ENCODE measurements at regions of chr2 and their contacts with region 1.

Region 1: DNA sequence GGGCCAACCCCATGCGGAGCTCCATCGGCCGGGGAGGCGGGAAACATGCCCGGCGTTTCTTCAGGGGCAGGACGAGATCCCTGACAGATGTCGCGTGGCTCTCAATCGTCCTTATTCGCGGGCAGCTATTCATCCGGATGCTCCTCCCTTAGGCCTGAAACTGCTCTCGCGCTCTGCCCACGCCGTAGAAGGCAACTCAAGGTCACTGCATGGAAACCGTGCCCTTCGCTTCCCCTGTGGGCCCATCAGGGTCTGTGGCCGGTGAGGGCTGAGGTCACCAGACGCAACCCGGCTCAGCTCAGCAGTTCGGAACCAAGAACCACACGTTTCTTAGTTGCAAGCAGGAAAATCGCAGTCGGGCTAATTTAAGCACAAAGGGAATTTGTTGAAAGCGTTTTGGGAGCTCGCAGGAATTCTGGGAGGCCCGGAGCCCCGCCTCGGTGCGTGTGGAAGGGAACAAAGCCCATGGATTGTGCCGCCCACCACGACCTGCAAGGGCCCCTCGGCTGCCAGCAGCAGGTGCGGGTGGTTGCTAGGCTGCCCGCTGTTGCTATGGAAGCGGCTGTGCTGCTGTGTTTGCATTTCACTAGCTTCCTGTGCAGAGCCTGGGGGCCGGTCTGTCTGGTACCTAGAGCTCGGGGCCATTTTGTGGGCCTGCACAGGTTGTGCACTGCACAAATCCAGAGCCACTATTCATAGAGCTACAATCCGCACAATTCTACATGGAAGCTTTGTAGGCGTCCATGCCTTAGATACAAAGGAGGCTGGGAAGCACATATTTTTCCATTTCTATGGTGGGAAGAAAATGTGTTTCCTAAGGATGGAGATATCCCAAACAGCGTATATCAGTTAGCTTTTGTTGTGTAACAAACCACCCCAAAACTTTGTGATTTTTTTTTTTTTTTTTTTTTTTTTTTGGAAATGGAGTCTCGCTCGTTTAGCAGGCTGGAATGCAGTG is 6.0 kb upstream of the ALLC start:
- DNase-seq: peak; percentile 86
- ATAC-seq: peak; percentile 81
- H3K4me3 Mint-ChIP-seq: peak overlapping the region; percentile 72
- H3K27ac Mint-ChIP-seq: peak overlapping the region; percentile 91
- H3K4me1 Mint-ChIP-seq: peaks cover 14% of the 10 kb centered on the region
- H3K27me3 Mint-ChIP-seq: no peaks in the 10 kb centered on the region

Region 2: DNA sequence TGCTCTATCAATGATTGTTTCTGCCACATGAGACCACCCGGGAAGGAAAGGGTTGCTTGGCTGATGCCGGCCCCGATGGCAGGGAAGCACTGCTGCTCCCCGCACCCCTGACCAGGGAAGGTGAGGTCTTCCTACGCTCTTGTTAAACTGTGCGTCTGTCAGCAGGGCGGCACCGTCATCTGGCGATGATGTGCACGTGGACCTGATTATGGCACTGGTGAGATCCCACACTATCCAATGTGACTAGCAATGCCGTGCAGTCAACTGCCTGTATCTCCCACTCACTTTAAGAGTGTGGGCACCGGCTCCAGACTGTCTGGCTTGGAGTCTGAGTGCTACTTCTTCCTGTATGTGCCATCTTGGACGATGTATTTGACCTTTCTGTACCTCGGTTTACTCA is 1530.1 kb before region 1 on chr2:
- CTCF ChIA-PET with region 1: interaction called, 3 read pairs
- POLR2A ChIA-PET with region 1: no interaction called
- intact Hi-C with region 1: loop called in 1 of 2 experiments (anchors 2 kb)
- DNase-seq: no peak
- ATAC-seq: no peak
- H3K4me3 Mint-ChIP-seq: no peak overlapping the region
- H3K27ac Mint-ChIP-seq: no peak overlapping the region
- H3K4me1 Mint-ChIP-seq: peaks cover 2% of the 10 kb centered on the region
- H3K27me3 Mint-ChIP-seq: no peaks in the 10 kb centered on the region

Region 3: GRCh38 chr2:3214827-3215404 is 437.1 kb before region 1 on chr2:
- CTCF ChIA-PET with region 1: no interaction called
- POLR2A ChIA-PET with region 1: no interaction called
- intact Hi-C with region 1: no loop called
- DNase-seq: no peak
- ATAC-seq: peak; percentile 62
- H3K4me3 Mint-ChIP-seq: no peak overlapping the region
- H3K27ac Mint-ChIP-seq: peak overlapping the region; percentile 63
- H3K4me1 Mint-ChIP-seq: peaks cover 33% of the 10 kb centered on the region
- H3K27me3 Mint-ChIP-seq: no peaks in the 10 kb centered on the region

Region 4: DNA sequence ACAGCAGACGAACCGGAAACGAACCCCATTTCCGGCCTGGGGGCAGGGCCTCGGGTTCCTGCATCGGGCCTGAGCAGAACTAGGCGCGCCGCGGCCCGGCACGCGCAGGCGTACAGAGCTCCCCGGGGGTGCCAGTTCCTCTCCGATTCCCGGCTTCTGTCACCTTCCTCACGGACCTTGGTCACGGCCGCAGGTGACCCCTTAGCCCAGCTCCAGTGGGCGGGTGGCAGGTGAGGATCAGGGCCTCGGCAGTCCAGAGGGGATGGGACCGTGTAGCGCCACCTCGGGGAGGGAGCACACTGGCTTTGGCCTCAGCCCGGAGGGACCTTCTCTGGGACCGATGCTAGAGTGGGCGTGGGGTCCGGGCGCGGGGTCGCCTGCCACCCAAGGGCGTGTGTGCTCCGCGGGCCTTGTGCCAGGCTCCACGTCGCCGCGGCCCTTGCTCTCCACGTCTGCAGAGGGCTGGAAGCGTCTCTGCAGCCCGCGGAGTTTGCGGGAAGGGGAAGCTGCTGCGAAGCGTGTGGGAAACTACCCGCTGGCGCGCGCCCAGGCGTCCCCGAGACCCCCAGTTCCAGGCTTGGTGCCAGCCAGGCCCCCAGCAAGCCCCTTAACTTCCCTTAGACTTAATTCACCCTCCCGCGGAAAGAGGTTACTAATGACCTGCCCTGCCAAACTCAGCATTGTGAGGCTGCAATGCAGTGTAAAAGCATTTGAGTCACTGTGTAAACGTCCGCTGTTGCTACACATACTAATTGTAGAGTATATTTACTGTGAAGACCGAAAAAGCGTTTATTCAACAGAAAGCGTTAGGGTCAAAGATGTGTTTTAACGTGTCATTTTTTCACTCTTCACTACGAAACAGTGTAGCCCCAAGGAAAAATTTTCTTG is 272.1 kb before region 1 on chr2 and contains the start of gene TRAPPC12:
- CTCF ChIA-PET with region 1: no interaction called
- POLR2A ChIA-PET with region 1: no interaction called
- intact Hi-C with region 1: loop called (anchors 1 to 2 kb)
- DNase-seq: peak; percentile 95
- ATAC-seq: peak; percentile 70
- H3K4me3 Mint-ChIP-seq: peak within 1 kb of the TSS; percentile 98
- H3K27ac Mint-ChIP-seq: peak within 1 kb of the TSS; percentile 96
- H3K4me1 Mint-ChIP-seq: peaks cover 50% of the 10 kb centered on the region
- H3K27me3 Mint-ChIP-seq: no peaks in the 10 kb centered on the region
- total RNA-seq, gene TRAPPC12: 60.0 to 73.1 TPM

Region 5: GRCh38 chr2:3461801-3462492 is 190.0 kb before region 1 on chr2:
- CTCF ChIA-PET with region 1: interaction called, 8 read pairs
- POLR2A ChIA-PET with region 1: no interaction called
- intact Hi-C with region 1: loop called in 1 of 2 experiments (anchors 1 kb)
- DNase-seq: peak; percentile 51
- ATAC-seq: peak; percentile 69
- H3K4me3 Mint-ChIP-seq: no peak overlapping the region
- H3K27ac Mint-ChIP-seq: peak overlapping the region; percentile 84
- H3K4me1 Mint-ChIP-seq: peaks cover 9% of the 10 kb centered on the region
- H3K27me3 Mint-ChIP-seq: no peaks in the 10 kb centered on the region

Region 6: GRCh38 chr2:3558205-3559014 is 93.6 kb before region 1 on chr2 and contains the start of gene RNASEH1:
- CTCF ChIA-PET with region 1: interaction called, 5 read pairs
- POLR2A ChIA-PET with region 1: interaction called, 10 read pairs
- intact Hi-C with region 1: loop called (anchors 1 kb)
- DNase-seq: peak; percentile 99
- ATAC-seq: peak; percentile 99
- H3K4me3 Mint-ChIP-seq: peak within 1 kb of the TSS; percentile 91
- H3K27ac Mint-ChIP-seq: peak within 1 kb of the TSS; percentile 96
- H3K4me1 Mint-ChIP-seq: peaks cover 34% of the 10 kb centered on the region
- H3K27me3 Mint-ChIP-seq: no peaks in the 10 kb centered on the region
- total RNA-seq, gene RNASEH1: 14.6 to 24.0 TPM

Measured in activated CD4-positive, alpha-beta T cell treated with anti-CD3 and anti-CD28 coated beads for 36 hours (primary cell).